Lower leg skin (tissue), 4 donors: ENCODE measurements at regions of chr18 and their contacts with region 1.

Region 1: DNA sequence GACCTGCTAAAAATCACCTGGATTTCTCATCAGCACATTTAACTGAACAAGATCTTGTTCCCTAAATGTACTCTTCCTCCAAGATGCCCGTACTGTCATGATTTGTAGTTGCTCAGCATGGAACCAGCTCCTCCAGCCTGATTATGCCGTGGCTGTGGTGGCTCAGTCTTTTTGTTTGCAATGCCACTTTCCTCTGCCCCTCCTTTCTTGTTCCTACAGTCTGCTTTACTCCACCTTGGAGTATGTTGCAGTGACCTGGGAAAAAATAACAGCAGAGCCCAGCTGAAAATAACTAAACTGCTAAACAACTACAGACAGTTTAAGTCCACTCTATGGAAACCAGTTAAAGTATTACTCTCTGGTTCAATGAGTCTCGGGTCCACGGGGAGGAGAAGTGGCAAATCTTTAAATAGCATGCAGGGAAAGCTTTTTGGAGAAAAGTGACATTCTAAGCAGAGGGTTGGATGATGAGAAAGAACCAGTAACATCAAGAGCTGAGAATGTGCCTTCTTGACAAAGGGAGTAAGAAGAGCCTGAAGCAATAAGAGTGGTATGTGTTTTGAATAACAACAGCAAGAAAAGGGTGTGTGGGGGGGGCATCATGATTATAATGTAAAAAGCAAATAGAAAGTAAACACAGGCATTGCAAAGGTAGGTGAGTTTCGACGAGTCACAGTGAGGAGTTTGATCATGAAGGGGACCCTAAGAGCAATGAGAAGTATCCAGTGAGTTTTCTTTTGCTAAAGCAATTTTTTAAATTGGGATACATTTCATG is 225.7 kb downstream of the TMX3 start:
- DNase-seq: no peak
- H3K4me3 ChIP-seq: no peak overlapping the region
- CTCF ChIP-seq: no peak
- POLR2A ChIP-seq: no peak

Region 2: GRCh38 chr18:70149616-70150304 is 1660.6 kb after region 1 on chr18:
- intact Hi-C with region 1: loop called (anchors 5 kb)
- DNase-seq: no peak
- H3K4me3 ChIP-seq: no peak overlapping the region
- CTCF ChIP-seq: no peak
- POLR2A ChIP-seq: no peak